ENCODE measurements at regions of chr5 and their contacts with region 1.

Region 1: DNA sequence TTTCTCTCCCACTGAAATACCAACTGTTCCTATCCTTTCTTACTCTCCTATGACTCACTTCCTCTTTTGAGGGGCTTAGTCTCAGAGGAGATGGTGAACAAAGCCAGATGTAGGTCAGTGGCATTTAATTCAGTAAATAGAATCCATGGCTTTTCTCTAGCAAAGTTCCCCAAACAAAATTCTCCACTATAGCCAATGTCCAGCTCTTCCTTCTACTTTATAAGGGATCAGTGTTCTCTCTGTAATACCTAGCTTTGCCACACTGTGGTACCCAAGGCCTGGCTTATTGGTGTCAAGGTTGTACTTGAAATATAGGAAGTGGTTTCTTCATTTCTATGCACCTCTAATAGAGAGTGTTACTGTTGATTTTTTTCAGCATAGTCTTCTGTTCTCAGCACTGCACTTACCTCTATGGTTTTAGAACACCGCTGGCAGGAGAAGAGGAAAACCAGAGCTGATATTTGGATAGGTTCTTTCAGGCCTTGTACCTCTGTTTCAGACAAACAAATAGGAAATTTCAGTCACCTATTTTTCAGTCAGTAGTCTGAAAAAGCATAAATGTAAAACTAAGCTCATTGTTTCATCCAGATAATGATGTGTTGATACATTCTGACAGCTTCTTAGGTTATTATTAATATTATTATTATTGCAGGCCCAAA is 40.6 kb upstream of the ITGA2 start:
- DNase-seq: peak; percentile 75 to 76
- H3K4me3 ChIP-seq: no peak overlapping the region
- H3K4me3 Mint-ChIP-seq: no peak overlapping the region
- H3K27ac Mint-ChIP-seq: no peak overlapping the region
- H3K4me1 ChIP-seq: peaks cover 8% of the 10 kb centered on the region; the same call in 1 of the 2 replicates
- H3K4me1 Mint-ChIP-seq: peaks cover 7% of the 10 kb centered on the region
- H3K27me3 ChIP-seq: no peaks in the 10 kb centered on the region
- H3K27me3 Mint-ChIP-seq: no peaks in the 10 kb centered on the region
- CTCF ChIP-seq: peak; percentile 78 to 86

Region 2: DNA sequence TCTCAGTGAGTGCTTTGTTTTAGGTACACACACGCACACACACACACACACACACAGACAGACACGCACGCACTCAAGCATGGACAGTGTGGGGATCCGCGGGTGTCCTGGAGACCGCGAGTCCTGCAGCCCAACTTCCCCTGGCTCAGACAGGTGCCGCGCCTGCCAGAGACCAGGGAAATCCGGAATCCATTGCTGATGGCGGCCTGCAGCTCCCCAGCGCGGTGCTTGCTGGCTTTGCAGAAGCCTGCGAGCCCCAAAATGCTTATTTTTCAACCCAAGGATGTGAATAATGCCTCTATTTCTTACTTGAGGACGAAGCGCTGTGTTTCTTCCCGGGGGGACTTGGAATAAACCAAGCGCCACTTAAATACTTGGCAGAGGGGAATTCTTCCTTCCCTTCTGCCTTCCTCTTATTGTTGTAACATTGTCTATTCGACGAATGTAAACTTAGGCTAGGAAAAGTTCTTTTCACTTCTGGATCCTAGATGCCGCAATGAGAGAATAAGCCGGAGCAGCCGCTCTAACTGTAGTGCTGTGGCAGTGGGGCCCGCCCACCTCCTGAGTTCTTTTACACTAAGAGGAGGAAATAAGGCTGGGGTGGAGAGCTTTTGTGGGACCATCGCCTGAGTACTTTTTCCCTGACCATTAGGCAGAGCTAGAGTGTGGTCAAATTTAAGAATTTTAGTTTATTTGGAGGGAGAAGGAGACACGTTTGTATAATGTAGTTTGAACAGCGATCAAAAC is 41.4 kb after region 1 on chr5:
- CTCF ChIA-PET with region 1: interaction called, 22 read pairs
- POLR2A ChIA-PET with region 1: no interaction called
- intact Hi-C with region 1: loop called (anchors 1 kb)
- DNase-seq: peak; percentile 65 to 68
- H3K4me3 ChIP-seq: peak overlapping the region; percentile 56
- H3K4me3 Mint-ChIP-seq: peak overlapping the region; percentile 85
- H3K27ac Mint-ChIP-seq: peak overlapping the region; percentile 60
- H3K4me1 ChIP-seq: peaks cover 22% of the 10 kb centered on the region
- H3K4me1 Mint-ChIP-seq: peaks cover 34% of the 10 kb centered on the region
- H3K27me3 ChIP-seq: no peaks in the 10 kb centered on the region
- H3K27me3 Mint-ChIP-seq: no peaks in the 10 kb centered on the region
- CTCF ChIP-seq: peak; percentile 25 to 67

Region 3: GRCh38 chr5:53045263-53045662 is 96.7 kb after region 1 on chr5:
- CTCF ChIA-PET with region 1: no interaction called
- POLR2A ChIA-PET with region 1: no interaction called
- intact Hi-C with region 1: no loop called
- DNase-seq: no peak
- H3K4me3 ChIP-seq: no peak overlapping the region
- H3K4me3 Mint-ChIP-seq: no peak overlapping the region
- H3K27ac Mint-ChIP-seq: no peak overlapping the region
- H3K4me1 ChIP-seq: peaks cover under 1% of the 10 kb centered on the region; the same call in 1 of the 2 replicates
- H3K4me1 Mint-ChIP-seq: no peaks in the 10 kb centered on the region
- H3K27me3 ChIP-seq: no peaks in the 10 kb centered on the region
- H3K27me3 Mint-ChIP-seq: no peaks in the 10 kb centered on the region
- CTCF ChIP-seq: no peak